ENCODE measurements at regions of chr7 and their contacts with region 1.

Region 1: DNA sequence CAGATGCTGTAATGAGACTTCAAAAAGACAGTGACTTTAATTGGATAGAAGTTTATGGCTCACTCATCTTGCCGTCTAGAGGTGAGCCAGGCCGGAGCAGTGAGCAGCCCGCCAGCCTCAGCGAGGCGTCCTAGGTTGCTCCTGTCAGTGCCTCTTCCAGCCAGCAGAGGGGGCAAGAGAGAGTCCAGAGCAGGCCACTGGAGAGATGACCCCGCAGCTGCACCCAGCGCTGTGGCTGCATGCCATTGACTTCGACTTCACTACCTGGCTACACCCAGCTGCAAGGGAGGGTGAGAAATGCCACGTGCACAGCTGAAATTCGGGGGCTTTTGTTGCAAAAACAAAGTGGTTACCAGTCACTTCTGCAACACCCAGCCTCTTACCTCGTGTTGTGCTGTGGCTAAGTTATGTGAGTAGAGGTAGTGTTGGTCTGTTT is 26.5 kb downstream of the NUB1 start:
- ATAC-seq: peak; percentile 86 to 100 (median 98)
- H3K4me3 ChIP-seq: no peak overlapping the region
- H3K27ac ChIP-seq: no peak overlapping the region
- H3K4me1 ChIP-seq: peaks cover 2 to 10% of the 10 kb centered on the region in 2 donors

Region 2: DNA sequence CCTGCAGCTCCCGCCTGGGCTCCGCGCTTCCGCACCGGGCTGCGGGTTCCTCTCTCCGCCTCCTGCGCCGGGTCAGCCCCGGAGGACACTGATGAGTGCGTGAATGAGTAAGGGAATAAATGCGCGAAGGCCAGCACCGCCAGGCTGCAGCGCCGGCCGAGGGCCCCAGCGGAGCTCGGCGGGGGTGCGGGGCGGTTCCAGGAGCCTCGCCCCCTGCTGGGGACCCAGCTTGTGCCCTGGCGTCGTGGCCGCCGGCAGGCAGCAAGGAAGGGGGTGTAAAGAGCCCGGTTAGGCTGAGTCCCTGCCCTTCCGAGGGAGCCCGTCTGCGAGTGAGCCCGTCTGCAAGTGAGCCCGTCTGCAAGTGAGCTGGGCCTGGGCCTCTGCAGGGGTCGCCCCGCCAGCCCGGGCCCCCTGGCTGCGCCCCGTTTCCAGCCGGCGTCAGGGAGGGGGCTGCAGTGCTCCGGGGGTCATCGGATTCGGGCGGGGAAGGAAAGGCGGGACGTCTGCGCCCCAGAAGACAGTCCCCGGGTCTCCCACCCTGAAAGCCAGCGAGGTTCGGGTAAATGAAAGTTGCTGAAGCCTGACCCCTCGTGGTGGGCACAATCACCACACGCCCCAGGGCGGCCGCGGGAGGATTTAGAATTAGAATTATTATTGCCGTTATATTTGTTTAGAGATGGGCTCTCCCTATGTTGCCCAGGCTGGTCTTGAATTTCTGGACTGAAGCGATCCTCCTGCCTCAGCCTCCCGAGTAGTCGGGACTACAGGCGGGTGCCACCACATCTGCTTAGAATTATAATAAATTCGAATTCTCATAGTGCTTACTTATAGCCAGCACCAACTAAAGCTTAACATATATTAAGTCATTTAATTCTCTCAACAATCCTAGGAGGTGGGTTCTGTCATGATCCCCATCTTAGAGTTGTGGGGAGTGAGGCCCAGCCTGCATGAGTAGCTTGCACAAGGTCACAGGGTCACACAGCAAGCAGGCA is 80.4 kb after region 1 on chr7:
- in situ Hi-C with region 1: loop called in 1 of 9 experiments (anchors 10 kb)
- ATAC-seq: peak; percentile 72 to 94 (median 79)
- H3K4me3 ChIP-seq: peak overlapping the region in 2 of 5 donors; percentile 11 to 16
- H3K27ac ChIP-seq: no peak overlapping the region
- H3K4me1 ChIP-seq: peaks cover 12% of the 10 kb centered on the region in 2 donors

Region 3: DNA sequence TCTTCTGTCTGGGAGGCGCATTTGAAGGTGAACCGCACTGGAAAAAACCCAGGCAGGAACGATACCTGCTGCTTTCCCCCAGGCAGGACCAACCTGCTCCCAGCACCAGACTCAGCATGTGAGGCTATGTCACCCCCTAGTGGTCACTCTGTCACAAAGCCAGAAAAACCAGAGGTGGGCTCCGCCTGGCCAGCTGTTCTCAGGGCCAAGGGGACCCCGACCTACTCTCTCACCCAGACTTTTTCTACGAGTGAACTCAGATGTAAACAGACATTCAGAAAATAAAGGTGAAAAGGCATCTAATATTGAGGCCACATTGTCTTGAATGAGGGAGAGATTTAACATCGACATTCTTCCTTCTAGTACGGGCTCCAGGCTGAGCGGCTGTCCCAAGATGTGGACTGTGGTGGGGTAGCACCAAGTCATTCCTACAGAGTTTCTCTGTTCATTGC is 391.5 kb after region 1 on chr7:
- in situ Hi-C with region 1: loop called in 1 of 9 experiments (anchors 25 kb)
- ATAC-seq: peak; percentile 7 to 85 (median 62)
- H3K4me3 ChIP-seq: no peak overlapping the region
- H3K27ac ChIP-seq: no peak overlapping the region
- H3K4me1 ChIP-seq: peaks cover 42 to 46% of the 10 kb centered on the region in 2 donors